ENCODE measurements at regions of chr3 and their contacts with region 1.

Region 1: DNA sequence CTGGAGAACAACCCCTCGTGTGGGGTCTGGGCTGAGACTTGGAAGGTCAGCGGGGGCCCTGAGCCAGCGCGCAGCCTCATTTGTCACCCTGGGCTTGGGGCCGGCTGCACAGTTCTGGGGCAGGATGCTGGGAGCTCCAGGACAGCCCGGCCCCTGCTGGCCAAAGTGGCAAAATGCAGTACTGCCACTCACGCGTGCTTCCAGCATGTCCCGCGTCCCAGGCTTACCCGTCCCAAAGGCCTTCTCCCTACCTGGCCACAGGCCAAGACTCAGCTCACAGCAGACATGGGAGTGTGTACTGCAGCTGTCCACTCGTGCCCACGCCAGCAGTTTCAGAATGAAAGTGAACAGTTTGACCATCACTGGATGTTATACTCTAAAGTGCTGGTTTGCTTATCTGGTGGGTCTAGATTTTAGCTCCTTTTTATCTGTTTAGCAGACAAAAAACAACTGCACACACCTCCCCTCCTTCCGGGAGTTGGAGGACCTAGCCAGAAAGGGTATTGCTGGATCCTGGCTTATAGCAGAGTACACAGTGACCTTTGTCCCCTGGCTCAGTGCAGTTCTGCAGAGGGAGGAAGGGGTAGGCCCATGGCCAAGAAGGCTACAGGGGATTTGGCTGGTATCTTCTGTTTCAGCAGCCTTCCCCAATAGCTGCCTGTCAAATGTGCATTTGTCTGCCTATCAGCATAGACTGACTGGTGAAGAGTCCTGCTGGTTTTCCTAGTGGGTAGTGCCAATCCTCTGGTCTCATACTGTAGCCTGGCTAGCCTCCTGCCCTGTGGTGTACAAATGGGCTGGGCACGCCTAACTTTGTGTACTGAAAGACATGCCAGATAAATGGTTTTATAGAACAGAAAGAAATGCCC is 23.2 kb upstream of the IP6K2 start:
- DNase-seq: peak; percentile 65
- ATAC-seq: peak; percentile 94
- H3K4me3 Mint-ChIP-seq: no peak overlapping the region
- H3K27ac Mint-ChIP-seq: no peak overlapping the region
- H3K4me1 Mint-ChIP-seq: peaks cover 3% of the 10 kb centered on the region
- H3K27me3 Mint-ChIP-seq: no peaks in the 10 kb centered on the region

Region 2: DNA sequence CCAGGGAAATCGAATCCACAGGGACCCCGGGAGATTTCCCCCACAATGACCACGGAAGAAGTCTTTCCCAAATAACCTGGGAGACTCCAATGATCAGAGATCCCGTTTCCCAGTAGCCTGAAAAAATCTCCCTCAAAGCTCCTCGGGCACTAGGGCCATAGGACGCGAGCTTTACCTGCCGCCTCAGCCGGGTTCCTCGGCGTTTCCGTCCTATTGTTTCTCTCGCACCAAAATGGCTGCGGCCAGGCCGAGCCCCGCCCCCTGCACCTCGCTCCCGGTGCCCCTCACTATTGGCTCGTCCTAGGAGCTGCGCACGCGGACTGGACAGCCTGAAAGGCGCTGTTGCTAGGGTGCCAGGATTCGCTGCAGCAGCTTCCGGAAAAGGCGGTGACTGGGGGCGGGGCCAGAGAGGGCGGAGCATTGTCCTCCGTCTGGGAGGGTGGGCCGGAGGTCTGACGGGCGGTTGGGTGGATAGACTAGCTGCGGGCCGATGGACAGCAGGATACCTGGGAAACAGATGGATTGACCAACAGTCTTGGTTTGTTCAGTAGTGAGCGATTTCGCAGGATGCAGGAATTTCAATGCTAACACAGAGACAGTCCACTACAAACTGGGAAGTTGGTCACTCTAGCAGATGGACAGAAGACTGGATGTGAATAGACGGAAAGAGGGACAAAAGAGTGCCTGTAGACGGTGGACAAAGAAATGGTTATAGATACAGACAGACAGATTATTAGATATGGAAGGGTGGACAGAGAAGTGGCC is 23.0 kb before region 1 on chr3 and contains the start of gene IP6K2:
- CTCF ChIA-PET with region 1: interaction called, 13 read pairs
- POLR2A ChIA-PET with region 1: interaction called, 4 read pairs
- DNase-seq: peak; percentile 99
- ATAC-seq: peak; percentile 100
- H3K4me3 Mint-ChIP-seq: peak within 1 kb of the TSS; percentile 99
- H3K27ac Mint-ChIP-seq: peak within 1 kb of the TSS; percentile 98
- H3K4me1 Mint-ChIP-seq: peaks cover 35% of the 10 kb centered on the region
- H3K27me3 Mint-ChIP-seq: peaks cover 19% of the 10 kb centered on the region
- total RNA-seq, gene IP6K2: 49.6 to 50.4 TPM

Region 3: GRCh38 chr3:48727511-48727910 is 12.7 kb before region 1 on chr3:
- CTCF ChIA-PET with region 1: interaction called, 12 read pairs
- POLR2A ChIA-PET with region 1: no interaction called
- DNase-seq: no peak
- ATAC-seq: no peak
- H3K4me3 Mint-ChIP-seq: no peak overlapping the region
- H3K27ac Mint-ChIP-seq: no peak overlapping the region
- H3K4me1 Mint-ChIP-seq: no peaks in the 10 kb centered on the region
- H3K27me3 Mint-ChIP-seq: peaks cover 8% of the 10 kb centered on the region

Region 4: DNA sequence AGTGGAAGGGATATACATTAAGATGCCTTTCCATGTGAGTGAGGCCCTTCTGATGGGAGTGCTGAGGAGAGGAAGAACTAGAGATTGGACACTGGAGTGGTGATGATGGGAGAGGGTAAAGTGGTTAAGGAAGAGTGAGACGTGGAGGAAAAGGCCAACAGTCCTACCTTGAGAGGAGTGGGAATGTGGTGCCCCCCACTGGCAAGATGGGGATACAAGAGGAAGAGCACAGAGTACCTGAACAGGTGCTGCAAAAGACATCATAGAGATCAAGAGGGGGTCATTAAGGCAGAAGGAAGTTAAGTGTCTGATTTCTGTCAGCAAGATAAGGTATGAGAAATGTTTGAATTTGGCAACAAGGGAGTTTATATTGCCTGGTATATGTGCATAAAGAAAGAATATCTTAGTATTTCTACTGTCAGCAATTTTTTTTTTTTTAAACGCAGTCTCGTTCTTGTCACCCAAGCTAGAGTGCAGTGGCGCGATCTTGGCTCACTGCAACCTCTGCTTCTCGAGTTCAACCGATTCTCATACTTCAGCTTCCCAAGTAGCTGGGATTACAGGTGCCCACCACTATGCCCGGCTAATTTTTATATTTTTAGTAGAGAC is 212.4 kb after region 1 on chr3:
- CTCF ChIA-PET with region 1: interaction called, 19 read pairs
- POLR2A ChIA-PET with region 1: no interaction called
- DNase-seq: peak; percentile 58
- ATAC-seq: peak; percentile 79
- H3K4me3 Mint-ChIP-seq: no peak overlapping the region
- H3K27ac Mint-ChIP-seq: peak overlapping the region; percentile 0
- H3K4me1 Mint-ChIP-seq: peaks cover 7% of the 10 kb centered on the region
- H3K27me3 Mint-ChIP-seq: no peaks in the 10 kb centered on the region

Region 5: DNA sequence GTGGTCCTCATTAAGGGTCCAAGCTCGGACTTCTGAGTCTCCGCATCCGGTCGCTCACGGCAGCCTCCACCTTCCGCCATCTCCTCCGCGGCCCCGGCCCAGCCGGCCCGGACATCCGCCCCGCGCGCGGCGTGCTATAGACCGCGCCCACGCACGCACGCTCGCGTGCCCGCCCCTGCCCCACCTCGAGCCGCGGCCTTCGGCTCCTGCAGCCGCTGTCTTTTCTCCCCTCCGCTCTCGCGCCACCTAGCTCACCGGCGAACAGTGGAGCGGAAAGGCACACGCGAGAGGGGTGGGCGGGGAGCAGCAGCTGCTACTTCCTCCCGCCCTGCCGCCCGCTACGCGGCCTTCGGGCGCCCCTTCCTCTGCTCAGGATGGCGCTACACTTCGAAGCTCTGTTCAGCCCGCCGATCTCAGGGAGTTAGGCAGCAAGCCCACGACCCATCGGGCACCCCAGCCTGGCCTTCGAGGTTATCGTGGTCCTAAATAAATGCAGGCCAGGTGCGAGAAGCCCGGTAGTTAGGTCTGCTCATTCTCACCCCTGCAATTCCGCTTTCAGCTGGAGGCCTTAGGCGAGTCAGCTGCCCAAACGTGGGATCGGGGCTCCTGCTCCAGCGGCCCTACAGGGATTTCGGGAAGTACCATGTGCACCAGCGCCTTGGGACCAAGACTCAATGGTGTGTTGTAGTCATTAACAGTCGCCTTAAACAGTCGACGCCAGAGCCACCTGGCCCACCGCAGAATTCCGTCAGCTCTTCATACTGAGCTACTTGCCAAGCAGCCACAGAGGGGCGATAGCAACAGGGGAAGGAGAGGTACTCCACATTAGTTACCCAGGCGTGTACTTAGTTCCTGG is 600.0 kb after region 1 on chr3 and contains the start of gene USP4:
- CTCF ChIA-PET with region 1: no interaction called
- POLR2A ChIA-PET with region 1: no interaction called
- DNase-seq: peak; percentile 95
- ATAC-seq: peak; percentile 93
- H3K4me3 Mint-ChIP-seq: peak within 1 kb of the TSS; percentile 97
- H3K27ac Mint-ChIP-seq: peak within 1 kb of the TSS; percentile 100
- H3K4me1 Mint-ChIP-seq: peaks cover 47% of the 10 kb centered on the region
- H3K27me3 Mint-ChIP-seq: no peaks in the 10 kb centered on the region
- total RNA-seq, gene USP4: 72.1 to 74.0 TPM

Measured in activated CD8-positive, alpha-beta T cell treated with anti-CD3 and anti-CD28 coated beads, Interleukin-2, amount 10 ng/mL, durations not matched to agents 7 days and 5 days (primary cell).